Endothelial cell of umbilical vein (primary cell): ENCODE measurements at regions of chr17 and their contacts with region 1.

Region 1: DNA sequence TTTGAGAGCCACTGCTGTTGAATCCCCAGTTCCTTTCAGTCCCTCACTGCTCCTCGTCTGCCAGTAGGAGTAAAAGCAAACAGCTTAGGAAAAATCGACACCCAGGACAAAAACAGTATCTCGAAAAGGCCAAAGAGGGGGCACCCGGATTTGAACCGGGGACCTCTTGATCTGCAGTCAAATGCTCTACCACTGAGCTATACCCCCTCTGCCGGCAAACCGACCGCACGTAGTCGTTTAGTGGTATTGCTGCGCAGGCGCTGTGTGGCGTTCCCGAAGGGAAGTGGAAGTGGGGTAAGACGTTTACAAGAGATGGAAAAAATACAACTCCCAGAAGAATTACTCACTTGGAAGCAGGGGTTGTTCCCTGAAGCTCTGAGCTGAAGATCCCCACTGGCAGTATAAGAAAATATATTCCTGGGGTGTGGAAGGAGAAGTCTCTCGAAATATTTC is 2.2 kb upstream of the PLXDC1 start:
- DNase-seq: peak; percentile 93
- H3K4me3 ChIP-seq: peak overlapping the region; percentile 35 to 82 (median 68)
- H3K27ac ChIP-seq: peak overlapping the region; percentile 0
- H3K4me1 ChIP-seq: peaks cover 8% of the 10 kb centered on the region
- H3K27me3 ChIP-seq: peaks cover 19 to 27% of the 10 kb centered on the region in 2 experiments
- CTCF ChIP-seq: peak in 1 of 2 donors; percentile 4
- POLR2A ChIP-seq: no peak

Region 2: DNA sequence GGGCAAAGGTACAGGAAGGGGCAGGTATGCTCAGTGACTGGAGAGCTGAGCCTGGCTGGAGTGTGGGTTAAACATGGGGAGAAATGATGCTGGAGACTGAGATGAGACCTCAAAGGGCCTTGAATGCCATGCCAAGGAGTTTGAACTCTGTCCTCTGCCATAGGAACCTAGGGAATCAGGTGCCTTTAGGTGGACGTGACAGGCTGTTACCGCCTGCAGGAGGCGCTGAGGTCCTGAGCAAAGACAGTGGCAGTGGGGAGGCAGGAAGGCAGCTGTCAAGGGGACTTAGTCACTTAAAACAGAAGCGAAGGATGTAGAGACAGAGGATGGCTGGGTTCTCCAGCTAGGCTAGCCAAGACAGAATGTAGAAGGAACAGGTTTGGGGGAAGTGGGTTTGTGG is 392.0 kb before region 1 on chr17:
- CTCF ChIA-PET with region 1: interaction called, 11 read pairs
- POLR2A ChIA-PET with region 1: no interaction called
- dilution Hi-C with region 1: no loop called
- intact Hi-C with region 1: no loop called
- DNase-seq: peak; percentile 52
- H3K4me3 ChIP-seq: no peak overlapping the region
- H3K27ac ChIP-seq: no peak overlapping the region
- H3K4me1 ChIP-seq: no peaks in the 10 kb centered on the region
- H3K27me3 ChIP-seq: no peaks in the 10 kb centered on the region
- CTCF ChIP-seq: peak; percentile 54 to 55
- POLR2A ChIP-seq: no peak

Region 3: DNA sequence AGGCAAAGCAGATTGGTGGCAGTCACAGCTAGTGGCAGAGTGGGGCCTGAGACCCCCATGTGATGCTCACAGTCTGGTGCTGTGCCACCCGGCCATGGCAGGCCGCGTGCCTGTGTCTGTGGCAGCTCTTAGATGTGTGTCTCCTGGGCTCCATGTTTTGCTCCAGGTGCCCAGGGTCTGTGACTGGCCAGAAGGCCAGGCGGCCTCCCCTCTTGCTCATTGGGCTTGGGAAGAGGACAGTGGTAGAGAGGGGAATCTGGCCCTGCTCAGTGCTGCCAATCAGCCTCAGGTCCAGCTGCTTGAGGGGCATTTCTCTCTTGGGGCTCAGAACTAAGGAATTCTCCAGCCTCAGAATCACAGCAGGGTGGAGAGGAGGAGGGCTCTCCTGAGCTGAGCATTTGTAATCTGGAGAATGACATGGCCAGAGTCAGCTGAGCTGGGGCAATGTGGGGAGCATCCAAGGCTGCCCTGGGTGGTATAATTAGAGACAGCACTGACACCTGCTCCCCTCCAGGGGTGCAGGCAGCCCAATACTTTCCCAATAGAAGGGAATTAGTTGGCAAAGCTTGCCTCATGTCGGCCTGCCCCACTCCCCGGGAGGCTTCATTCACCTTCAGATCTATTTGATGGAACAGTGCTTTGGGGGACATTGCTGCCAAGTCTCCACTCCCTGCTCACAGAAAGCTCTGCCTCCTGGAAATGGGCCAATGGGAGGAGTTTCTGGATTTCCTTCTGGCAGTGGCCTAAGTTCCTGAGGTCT is 230.9 kb before region 1 on chr17:
- CTCF ChIA-PET with region 1: interaction called, 18 read pairs
- POLR2A ChIA-PET with region 1: interaction called, 3 read pairs
- dilution Hi-C with region 1: no loop called
- intact Hi-C with region 1: loop called (anchors 2 kb)
- DNase-seq: peak; percentile 67
- H3K4me3 ChIP-seq: no peak overlapping the region
- H3K27ac ChIP-seq: no peak overlapping the region
- H3K4me1 ChIP-seq: no peaks in the 10 kb centered on the region
- H3K27me3 ChIP-seq: no peaks in the 10 kb centered on the region
- CTCF ChIP-seq: peak in 1 of 2 donors; percentile 9
- POLR2A ChIP-seq: peak; percentile 16

Region 4: GRCh38 chr17:39164675-39165143 is 11.1 kb after region 1 on chr17:
- CTCF ChIA-PET with region 1: interaction called, 57 read pairs
- POLR2A ChIA-PET with region 1: no interaction called
- dilution Hi-C with region 1: no loop called
- intact Hi-C with region 1: loop called (anchors 1 kb)
- DNase-seq: peak; percentile 86
- H3K4me3 ChIP-seq: peak overlapping the region; percentile 2 to 54 (median 36)
- H3K27ac ChIP-seq: no peak overlapping the region
- H3K4me1 ChIP-seq: peaks cover 5% of the 10 kb centered on the region
- H3K27me3 ChIP-seq: peaks cover 27 to 31% of the 10 kb centered on the region in 2 experiments
- CTCF ChIP-seq: peak; percentile 70 to 89
- POLR2A ChIP-seq: no peak

Region 5: GRCh38 chr17:39183720-39184119 is 30.1 kb after region 1 on chr17:
- CTCF ChIA-PET with region 1: no interaction called
- POLR2A ChIA-PET with region 1: no interaction called
- dilution Hi-C with region 1: no loop called
- intact Hi-C with region 1: no loop called
- DNase-seq: no peak
- H3K4me3 ChIP-seq: no peak overlapping the region
- H3K27ac ChIP-seq: no peak overlapping the region
- H3K4me1 ChIP-seq: peaks cover 2% of the 10 kb centered on the region
- H3K27me3 ChIP-seq: no peaks in the 10 kb centered on the region
- CTCF ChIP-seq: no peak
- POLR2A ChIP-seq: no peak

Region 6: DNA sequence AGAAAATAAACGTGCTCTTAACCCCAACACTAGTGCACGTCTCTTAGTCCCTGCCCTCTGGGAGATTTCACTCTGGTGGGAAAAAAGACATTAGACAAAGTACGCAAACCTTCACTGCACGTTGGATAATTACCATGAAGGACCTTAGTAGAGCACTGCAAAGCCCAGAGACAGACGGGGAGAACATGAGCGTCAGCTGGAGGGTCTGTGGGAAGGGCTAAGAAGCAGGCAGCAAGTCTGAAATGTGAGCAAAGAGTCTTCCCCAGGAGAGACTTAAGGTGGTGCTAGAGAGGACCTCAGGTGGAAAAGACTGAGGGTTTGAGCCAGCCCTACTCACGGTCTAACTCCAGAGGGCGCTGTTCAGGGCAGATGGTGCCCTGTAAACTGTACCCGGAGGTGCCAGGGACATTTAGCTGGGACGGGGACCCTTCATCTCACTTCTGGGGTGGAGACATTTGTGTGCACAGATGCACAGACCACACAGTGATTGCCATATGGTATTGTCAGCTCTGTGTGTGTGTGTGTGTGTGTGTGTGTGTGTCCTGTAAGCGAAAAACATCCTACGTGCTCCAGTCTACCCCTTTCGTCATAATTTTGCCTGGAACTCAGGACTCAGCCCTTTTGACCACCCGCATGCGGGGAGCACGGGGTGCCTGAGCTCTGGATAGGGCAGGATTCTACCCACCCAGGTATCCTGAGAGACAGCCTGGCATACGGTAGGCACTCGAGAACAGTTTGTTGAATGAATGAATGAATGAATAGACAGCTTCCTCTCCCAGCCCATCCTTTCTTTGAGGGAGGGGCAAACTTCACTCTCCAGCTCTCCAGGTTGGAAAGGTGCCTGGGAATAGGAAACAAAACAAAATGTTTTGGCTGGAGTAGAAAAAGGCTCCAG is 82.2 kb after region 1 on chr17:
- CTCF ChIA-PET with region 1: interaction called, 11 read pairs
- POLR2A ChIA-PET with region 1: no interaction called
- dilution Hi-C with region 1: no loop called
- intact Hi-C with region 1: loop called (anchors 1 kb)
- DNase-seq: peak; percentile 53
- H3K4me3 ChIP-seq: no peak overlapping the region
- H3K27ac ChIP-seq: no peak overlapping the region
- H3K4me1 ChIP-seq: peaks cover 3% of the 10 kb centered on the region
- H3K27me3 ChIP-seq: peaks cover 4 to 5% of the 10 kb centered on the region in 2 experiments
- CTCF ChIP-seq: peak; percentile 83 to 85
- POLR2A ChIP-seq: no peak

Region 7: DNA sequence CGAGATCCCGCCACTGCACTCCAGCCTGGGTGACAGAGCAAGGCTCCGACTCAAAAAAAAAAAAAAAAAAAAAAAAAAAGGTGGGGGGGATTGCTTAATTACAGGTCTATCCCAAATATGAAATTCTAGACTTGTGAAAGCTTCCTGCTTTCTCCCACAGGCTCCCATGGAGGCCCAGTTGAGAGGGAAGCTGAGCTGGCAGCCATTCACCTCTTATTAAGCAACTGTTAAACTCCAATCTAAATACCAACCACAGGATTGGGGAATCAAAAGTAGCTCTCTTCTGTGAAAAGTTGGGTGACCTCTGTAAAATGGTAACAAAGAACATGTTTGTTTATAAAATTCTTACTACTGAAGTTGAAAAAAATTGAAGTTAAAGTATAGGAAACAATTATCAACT is 117.9 kb after region 1 on chr17:
- CTCF ChIA-PET with region 1: no interaction called
- POLR2A ChIA-PET with region 1: no interaction called
- dilution Hi-C with region 1: no loop called
- intact Hi-C with region 1: no loop called
- DNase-seq: no peak
- H3K4me3 ChIP-seq: no peak overlapping the region
- H3K27ac ChIP-seq: no peak overlapping the region
- H3K4me1 ChIP-seq: no peaks in the 10 kb centered on the region
- H3K27me3 ChIP-seq: no peaks in the 10 kb centered on the region
- CTCF ChIP-seq: no peak
- POLR2A ChIP-seq: no peak